ENCODE measurements at regions of chr11 and their contacts with region 1.

Region 1: DNA sequence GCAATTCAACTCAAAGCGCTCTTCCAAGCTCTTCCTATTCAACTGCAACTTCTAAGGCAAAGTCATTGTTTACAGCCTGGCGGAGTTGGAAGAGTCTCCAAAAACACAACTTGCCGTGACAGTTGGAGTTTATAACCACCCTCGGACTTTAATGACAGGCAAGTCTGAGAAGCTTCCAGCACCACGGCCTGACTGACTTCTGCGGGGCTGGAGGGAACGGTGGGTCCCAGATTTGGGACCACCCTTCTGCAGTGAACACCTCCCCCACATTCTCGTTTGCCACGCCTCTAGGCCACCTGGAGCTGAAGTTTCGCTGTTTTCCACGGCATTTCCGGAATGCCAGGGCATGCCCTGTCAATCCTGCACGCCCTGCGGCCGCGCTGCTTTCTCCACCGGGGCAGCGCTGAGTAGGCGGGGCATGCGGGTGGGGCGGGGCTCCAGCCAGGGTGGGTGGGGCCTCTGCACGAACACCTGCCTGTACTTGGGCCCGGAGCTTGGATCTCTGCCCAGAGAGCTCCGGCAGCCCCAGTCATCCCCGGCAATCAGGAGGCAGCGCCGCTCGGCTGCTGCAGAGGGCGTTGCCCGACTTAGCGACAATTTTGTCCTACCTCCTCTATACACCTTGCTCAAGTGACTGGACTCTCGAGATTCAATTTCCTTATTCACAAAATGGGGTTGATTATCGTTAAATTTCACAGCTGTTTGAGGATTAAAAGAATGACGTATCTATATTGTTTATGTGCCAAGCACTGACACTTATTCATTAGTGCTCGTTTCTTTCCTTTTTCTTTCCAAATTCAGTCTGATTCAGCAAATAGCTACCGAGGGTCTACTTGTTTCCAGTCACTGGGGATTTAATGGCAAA is 48.7 kb upstream of the BIRC3 start:
- DNase-seq: peak; percentile 92
- ATAC-seq: peak; percentile 99
- H3K4me3 Mint-ChIP-seq: peak overlapping the region; percentile 71
- H3K27ac Mint-ChIP-seq: peak overlapping the region; percentile 85
- H3K4me1 Mint-ChIP-seq: peaks cover 29% of the 10 kb centered on the region
- H3K27me3 Mint-ChIP-seq: peaks cover 2% of the 10 kb centered on the region; the same call in 1 of the 2 replicates
- CTCF ChIP-seq: 0 out of 2 replicates have a peak, but pooled peaks have one; percentile 14

Region 2: GRCh38 chr11:101061606-101062005 is 1207.0 kb before region 1 on chr11:
- CTCF ChIA-PET with region 1: no interaction called
- POLR2A ChIA-PET with region 1: no interaction called
- DNase-seq: no peak
- ATAC-seq: no peak
- H3K4me3 Mint-ChIP-seq: no peak overlapping the region
- H3K27ac Mint-ChIP-seq: no peak overlapping the region
- H3K4me1 Mint-ChIP-seq: no peaks in the 10 kb centered on the region
- H3K27me3 Mint-ChIP-seq: no peaks in the 10 kb centered on the region
- CTCF ChIP-seq: no peak

Region 3: GRCh38 chr11:102007567-102008437 is 260.8 kb before region 1 on chr11:
- CTCF ChIA-PET with region 1: interaction called, 16 read pairs
- POLR2A ChIA-PET with region 1: no interaction called
- DNase-seq: no peak
- ATAC-seq: no peak
- H3K4me3 Mint-ChIP-seq: no peak overlapping the region
- H3K27ac Mint-ChIP-seq: no peak overlapping the region
- H3K4me1 Mint-ChIP-seq: peaks cover 6% of the 10 kb centered on the region
- H3K27me3 Mint-ChIP-seq: no peaks in the 10 kb centered on the region; the same call in 1 of the 2 replicates
- CTCF ChIP-seq: peak; percentile 34

Region 4: DNA sequence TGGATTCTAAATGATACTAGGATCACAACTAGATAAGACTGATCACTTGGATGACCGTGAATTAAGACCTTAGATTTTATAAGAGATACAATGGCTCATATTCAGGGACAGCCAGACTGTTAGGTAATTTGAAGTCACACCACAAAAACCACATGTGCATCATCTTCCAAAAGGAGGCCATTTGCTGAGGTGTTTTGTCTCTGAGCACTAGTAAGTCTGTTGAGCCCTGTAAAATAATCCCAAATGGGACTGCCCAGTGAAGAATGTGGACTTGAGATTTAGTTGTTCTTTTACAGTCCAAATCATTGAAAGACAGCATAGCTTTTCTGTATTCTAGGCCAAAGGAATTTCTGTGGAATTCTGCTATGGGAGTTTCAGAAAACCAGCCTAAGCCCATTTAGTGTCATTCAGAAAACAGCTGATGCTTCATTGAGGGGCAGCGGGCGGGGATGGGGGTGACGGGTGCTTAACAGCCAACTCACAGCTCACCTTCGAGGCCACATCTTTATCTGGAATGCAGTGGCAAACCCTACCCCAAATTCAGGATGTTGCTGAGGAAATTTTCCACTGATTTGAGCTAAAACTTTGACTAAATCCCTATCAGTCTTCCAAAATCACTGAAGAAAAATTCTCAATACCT is 31.3 kb before region 1 on chr11:
- CTCF ChIA-PET with region 1: interaction called, 16 read pairs
- POLR2A ChIA-PET with region 1: no interaction called
- DNase-seq: no peak
- ATAC-seq: no peak
- H3K4me3 Mint-ChIP-seq: no peak overlapping the region
- H3K27ac Mint-ChIP-seq: no peak overlapping the region
- H3K4me1 Mint-ChIP-seq: peaks cover 34% of the 10 kb centered on the region
- H3K27me3 Mint-ChIP-seq: no peaks in the 10 kb centered on the region
- CTCF ChIP-seq: no peak

Region 5: GRCh38 chr11:102279641-102280170 is 11.1 kb after region 1 on chr11:
- CTCF ChIA-PET with region 1: interaction called, 35 read pairs
- POLR2A ChIA-PET with region 1: no interaction called
- DNase-seq: no peak
- ATAC-seq: peak; percentile 31
- H3K4me3 Mint-ChIP-seq: peak overlapping the region; percentile 54
- H3K27ac Mint-ChIP-seq: peak overlapping the region; percentile 58
- H3K4me1 Mint-ChIP-seq: peaks cover 35% of the 10 kb centered on the region
- H3K27me3 Mint-ChIP-seq: no peaks in the 10 kb centered on the region
- CTCF ChIP-seq: no peak

Region 6: DNA sequence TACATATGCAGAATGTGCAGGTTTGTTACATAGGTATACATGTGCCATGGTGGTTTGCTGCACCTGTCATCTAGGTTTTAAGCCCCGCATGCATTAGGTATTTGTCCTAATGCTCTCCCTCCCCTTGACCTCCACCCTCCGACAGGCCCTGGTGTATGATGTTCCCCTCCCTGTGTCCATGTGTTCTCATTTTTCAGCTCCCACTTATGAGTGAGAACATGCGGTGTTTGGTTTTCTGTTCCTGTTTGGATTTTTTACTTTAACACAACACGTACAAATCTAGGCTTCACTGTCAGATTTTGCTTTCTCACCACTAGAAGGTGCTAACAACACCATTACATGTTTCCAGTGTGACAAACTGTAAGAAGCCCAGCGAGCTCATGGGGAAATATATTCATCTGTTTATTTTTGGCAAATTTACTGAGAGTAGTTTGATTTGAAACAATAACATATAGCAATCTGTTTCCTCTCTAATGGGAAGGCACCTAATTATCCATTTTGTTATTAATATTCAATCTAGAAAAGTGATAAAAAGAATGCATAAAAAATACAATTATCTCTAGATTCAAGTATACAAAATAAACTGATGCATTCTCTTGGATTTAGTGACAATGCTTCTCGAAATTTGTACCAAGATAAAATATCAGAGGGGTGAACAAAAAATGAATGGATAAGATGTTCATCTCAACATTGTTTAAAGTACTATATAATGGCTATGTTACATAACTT is 25.5 kb after region 1 on chr11:
- CTCF ChIA-PET with region 1: interaction called, 19 read pairs
- POLR2A ChIA-PET with region 1: no interaction called
- DNase-seq: no peak
- ATAC-seq: peak; percentile 72
- H3K4me3 Mint-ChIP-seq: no peak overlapping the region
- H3K27ac Mint-ChIP-seq: no peak overlapping the region
- H3K4me1 Mint-ChIP-seq: peaks cover 12% of the 10 kb centered on the region
- H3K27me3 Mint-ChIP-seq: no peaks in the 10 kb centered on the region; the same call in 1 of the 2 replicates
- CTCF ChIP-seq: 0 out of 2 replicates have a peak, but pooled peaks have one; percentile 35

Region 7: GRCh38 chr11:102325088-102325487 is 56.5 kb after region 1 on chr11:
- CTCF ChIA-PET with region 1: no interaction called
- POLR2A ChIA-PET with region 1: no interaction called
- DNase-seq: no peak
- ATAC-seq: peak; percentile 32; the same call in 1 of the 2 replicates
- H3K4me3 Mint-ChIP-seq: no peak overlapping the region
- H3K27ac Mint-ChIP-seq: no peak overlapping the region
- H3K4me1 Mint-ChIP-seq: no peaks in the 10 kb centered on the region
- H3K27me3 Mint-ChIP-seq: no peaks in the 10 kb centered on the region
- CTCF ChIP-seq: no peak

Measured in WTC11 (cell line).